Activated B cell treated with CpG ODN at 0.5 μM for 24 hours (primary cell): ENCODE measurements at regions of chr18 and their contacts with region 1.

Region 1: GRCh38 chr18:58960946-58961722 is 96.5 kb downstream of the ZNF532 start:
- DNase-seq: no peak
- ATAC-seq: no peak
- H3K4me3 Mint-ChIP-seq: peak overlapping the region; percentile 29
- H3K27ac Mint-ChIP-seq: peak overlapping the region; percentile 81
- H3K4me1 Mint-ChIP-seq: peaks cover 53% of the 10 kb centered on the region
- H3K27me3 Mint-ChIP-seq: no peaks in the 10 kb centered on the region
- CTCF ChIP-seq: no peak

Region 2: GRCh38 chr18:58947136-58947732 is 13.9 kb before region 1 on chr18:
- CTCF ChIA-PET with region 1: no interaction called
- POLR2A ChIA-PET with region 1: interaction called, 16 read pairs
- intact Hi-C with region 1: loop called (anchors 1 kb)
- DNase-seq: no peak
- ATAC-seq: no peak
- H3K4me3 Mint-ChIP-seq: no peak overlapping the region
- H3K27ac Mint-ChIP-seq: peak overlapping the region; percentile 93
- H3K4me1 Mint-ChIP-seq: peaks cover 54% of the 10 kb centered on the region
- H3K27me3 Mint-ChIP-seq: no peaks in the 10 kb centered on the region
- CTCF ChIP-seq: no peak

Region 3: GRCh38 chr18:58983260-58984155 is 22.4 kb after region 1 on chr18:
- CTCF ChIA-PET with region 1: no interaction called
- POLR2A ChIA-PET with region 1: interaction called, 11 read pairs
- intact Hi-C with region 1: no loop called
- DNase-seq: no peak
- ATAC-seq: no peak
- H3K4me3 Mint-ChIP-seq: no peak overlapping the region
- H3K27ac Mint-ChIP-seq: peak overlapping the region; percentile 5
- H3K4me1 Mint-ChIP-seq: peaks cover 1% of the 10 kb centered on the region
- H3K27me3 Mint-ChIP-seq: no peaks in the 10 kb centered on the region
- CTCF ChIP-seq: no peak

Region 4: GRCh38 chr18:59022167-59022945 is 61.2 kb after region 1 on chr18:
- CTCF ChIA-PET with region 1: no interaction called
- POLR2A ChIA-PET with region 1: no interaction called
- intact Hi-C with region 1: no loop called
- DNase-seq: no peak
- ATAC-seq: no peak
- H3K4me3 Mint-ChIP-seq: no peak overlapping the region
- H3K27ac Mint-ChIP-seq: no peak overlapping the region
- H3K4me1 Mint-ChIP-seq: no peaks in the 10 kb centered on the region
- H3K27me3 Mint-ChIP-seq: no peaks in the 10 kb centered on the region
- CTCF ChIP-seq: no peak